WTC11 (cell line): ENCODE measurements at regions of chr19 and their contacts with region 1.

Region 1: DNA sequence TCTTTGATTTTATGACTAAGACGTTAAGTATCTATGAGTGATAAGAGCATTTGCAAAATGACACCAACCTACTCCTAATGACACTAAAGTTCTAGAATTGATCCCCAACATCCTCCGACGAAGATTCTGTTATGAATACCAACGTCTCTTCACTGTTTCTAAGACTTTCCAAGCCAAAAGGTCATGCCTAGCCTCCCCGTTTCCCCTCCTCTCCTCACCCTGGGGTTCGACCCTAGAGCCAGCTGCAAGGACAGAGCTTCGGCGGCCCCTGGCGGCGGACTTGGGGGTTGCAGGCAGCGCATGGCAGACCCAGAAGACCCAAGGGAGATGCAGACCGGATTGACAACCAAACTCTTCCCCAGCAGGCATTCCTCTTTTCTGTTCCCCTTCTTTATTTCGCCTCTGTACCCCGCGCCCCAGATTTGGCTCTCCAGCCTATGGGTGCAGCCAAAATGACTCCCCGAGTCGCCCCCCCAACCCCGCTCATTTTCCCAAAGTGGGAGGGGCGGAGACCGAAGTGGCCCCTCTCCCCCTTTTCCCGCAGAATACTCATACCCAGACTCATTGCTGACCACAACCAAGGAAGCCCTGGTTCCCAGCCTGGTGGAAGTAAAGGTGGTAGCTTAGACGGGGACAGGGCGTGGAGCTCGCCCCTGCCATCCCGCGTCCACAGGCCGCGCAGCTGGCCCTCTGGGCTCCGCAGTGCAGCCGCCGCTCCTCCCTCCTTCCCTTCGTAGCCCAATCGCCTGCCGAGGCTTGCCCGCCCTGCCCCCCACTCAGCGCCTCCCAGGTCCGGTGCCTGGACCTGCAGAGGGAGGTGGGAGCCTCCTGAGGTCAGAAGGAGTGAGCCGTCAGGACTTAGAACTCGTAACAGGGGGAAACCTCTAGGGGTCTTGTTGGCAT is 4.1 kb upstream of the EML2 start:
- DNase-seq: peak; percentile 96
- ATAC-seq: peak; percentile 40
- H3K4me3 Mint-ChIP-seq: peak overlapping the region; percentile 86
- H3K27ac Mint-ChIP-seq: peak overlapping the region; percentile 93
- H3K4me1 Mint-ChIP-seq: peaks cover 40% of the 10 kb centered on the region
- H3K27me3 Mint-ChIP-seq: peaks cover 24% of the 10 kb centered on the region
- CTCF ChIP-seq: peak; percentile 99

Region 2: DNA sequence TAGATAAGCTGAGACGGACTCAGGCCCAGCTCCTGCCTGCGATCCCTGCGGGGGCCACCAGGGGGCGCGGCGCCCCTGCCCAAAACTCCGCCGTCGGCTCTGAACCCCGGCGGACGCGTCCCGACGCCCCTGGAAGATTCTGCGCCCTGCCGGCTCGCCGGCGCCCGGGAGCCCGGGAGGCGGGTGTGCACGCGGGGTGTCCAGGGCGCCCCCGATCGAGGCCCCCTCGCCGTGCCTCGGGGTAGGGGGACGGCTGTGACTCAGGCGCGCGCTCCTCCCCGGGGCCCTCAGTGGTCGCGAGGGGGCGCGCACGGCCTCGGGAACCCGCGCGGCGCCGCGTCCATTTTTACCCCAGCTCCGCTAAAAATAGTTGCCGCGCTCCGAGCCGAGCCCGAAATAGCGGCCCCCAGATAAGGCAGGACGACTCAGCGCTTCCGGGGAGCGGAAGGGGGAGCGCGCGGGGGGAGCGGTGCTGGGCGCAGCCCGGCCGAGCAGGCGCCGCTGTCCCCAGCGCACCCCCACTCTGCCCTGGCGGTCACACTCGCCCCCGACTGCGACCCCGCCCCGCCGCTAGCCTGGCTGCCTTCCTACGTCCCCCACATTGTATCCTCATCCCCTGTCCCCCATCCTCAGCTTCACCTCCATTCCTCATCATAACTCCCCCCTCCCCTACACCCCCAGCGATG is 203.6 kb before region 1 on chr19:
- CTCF ChIA-PET with region 1: interaction called, 22 read pairs
- POLR2A ChIA-PET with region 1: no interaction called
- DNase-seq: peak; percentile 79
- ATAC-seq: peak; percentile 7
- H3K4me3 Mint-ChIP-seq: peak overlapping the region; percentile 69
- H3K27ac Mint-ChIP-seq: no peak overlapping the region
- H3K4me1 Mint-ChIP-seq: peaks cover 26% of the 10 kb centered on the region
- H3K27me3 Mint-ChIP-seq: peaks cover 27% of the 10 kb centered on the region
- CTCF ChIP-seq: peak; percentile 100

Region 3: GRCh38 chr19:45526143-45526542 is 117.1 kb before region 1 on chr19:
- CTCF ChIA-PET with region 1: interaction called, 26 read pairs
- POLR2A ChIA-PET with region 1: no interaction called
- DNase-seq: peak; percentile 93
- ATAC-seq: peak; percentile 46
- H3K4me3 Mint-ChIP-seq: no peak overlapping the region
- H3K27ac Mint-ChIP-seq: peak overlapping the region; percentile 96
- H3K4me1 Mint-ChIP-seq: peaks cover 19% of the 10 kb centered on the region
- H3K27me3 Mint-ChIP-seq: peaks cover 21% of the 10 kb centered on the region
- CTCF ChIP-seq: no peak

Region 4: DNA sequence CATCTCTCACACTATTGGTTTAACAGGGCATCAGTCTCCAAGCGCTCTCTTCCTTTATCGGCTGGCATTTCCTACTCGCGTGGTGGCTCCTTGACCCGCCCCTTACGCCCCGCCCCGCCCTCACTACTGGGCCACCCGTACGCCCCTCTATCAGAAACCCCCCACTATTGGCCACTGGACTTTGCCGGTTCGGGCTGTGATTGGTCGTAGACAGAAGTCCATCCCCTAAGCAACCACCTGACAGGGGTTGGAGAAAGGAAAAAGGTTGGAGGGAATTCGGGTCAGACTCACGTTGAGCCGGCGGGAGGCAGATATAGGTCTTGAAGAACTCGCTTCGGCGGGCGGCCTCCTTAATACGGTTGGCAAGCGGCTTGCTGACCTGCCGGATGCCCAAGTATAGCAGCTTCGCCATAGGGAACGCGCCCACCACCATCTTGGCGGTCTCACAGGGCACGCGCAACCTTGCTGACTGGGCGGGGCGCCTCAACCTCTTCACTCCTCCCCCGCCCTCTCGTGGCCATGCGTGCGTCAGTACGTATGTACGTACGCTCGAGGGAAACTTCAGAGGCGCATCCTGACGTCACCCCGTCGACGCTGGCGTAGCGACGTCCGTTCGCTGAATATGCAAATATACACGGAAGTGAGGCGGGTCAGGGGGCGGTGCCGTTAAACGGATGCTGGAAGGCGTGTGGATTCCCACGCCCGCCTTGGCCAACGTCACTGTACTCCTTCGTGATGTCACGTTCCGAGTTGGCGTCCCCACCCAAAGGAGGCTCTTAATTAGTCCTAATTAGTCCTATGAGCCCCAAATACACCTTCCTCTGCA is 58.7 kb before region 1 on chr19 and contains the start of gene OPA3:
- CTCF ChIA-PET with region 1: interaction called, 35 read pairs
- POLR2A ChIA-PET with region 1: no interaction called
- DNase-seq: peak; percentile 98
- ATAC-seq: peak; percentile 96
- H3K4me3 Mint-ChIP-seq: peak within 1 kb of the TSS; percentile 91
- H3K27ac Mint-ChIP-seq: peak within 1 kb of the TSS; percentile 97
- H3K4me1 Mint-ChIP-seq: peaks cover 17% of the 10 kb centered on the region
- H3K27me3 Mint-ChIP-seq: peaks cover 11% of the 10 kb centered on the region
- CTCF ChIP-seq: no peak
- total RNA-seq, gene OPA3: 10.1 to 16.1 TPM (median 14.9 TPM) in 3 replicates

Region 5: DNA sequence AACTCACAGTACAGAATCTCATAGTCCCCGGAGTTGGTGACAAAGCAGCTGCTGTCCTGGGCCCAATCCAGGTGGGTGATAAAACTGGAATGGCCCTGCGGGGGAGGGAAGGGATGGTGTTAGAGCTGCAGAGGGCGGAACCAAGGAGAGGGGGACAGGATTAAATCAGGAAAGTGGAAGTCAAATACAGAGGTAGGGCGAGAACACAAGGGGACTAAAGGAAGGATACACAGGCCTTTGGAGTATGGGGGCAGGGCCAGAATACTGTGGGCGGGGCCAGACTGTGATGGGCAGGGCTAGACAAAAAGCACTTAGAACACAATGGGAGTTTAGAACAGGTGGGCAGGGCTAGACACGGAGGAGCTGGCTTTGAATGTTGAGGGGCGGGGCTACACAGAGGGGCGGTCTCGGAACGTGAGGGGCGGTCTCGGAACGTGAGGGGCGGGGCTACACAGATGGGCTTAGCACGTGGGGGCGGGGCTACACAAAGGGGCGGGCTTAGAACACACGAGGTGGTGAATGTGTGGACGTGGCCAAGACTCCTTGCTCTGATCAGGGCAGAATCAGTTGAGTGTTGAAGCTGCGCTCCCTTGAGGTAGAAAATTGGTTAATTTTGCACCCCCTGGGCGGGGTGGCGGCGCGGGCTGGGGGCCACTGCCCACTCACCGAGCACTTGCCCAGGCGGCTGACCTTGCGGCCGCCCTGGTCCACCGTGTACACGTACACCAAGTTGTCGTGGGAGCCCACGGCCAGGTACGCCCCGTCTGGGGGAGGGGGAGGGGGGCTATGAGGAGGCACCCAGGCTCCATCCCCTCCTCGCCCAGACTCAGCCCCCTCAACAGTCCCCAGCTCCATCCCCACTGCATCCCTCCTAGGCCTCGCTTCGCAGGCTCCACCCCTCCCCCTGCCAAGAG is 27.2 kb before region 1 on chr19:
- CTCF ChIA-PET with region 1: interaction called, 86 read pairs
- POLR2A ChIA-PET with region 1: interaction called, 13 read pairs
- DNase-seq: peak; percentile 99
- ATAC-seq: peak; percentile 96
- H3K4me3 Mint-ChIP-seq: peak overlapping the region; percentile 86
- H3K27ac Mint-ChIP-seq: peak overlapping the region; percentile 99
- H3K4me1 Mint-ChIP-seq: 0 out of 2 replicates have a peak, but pooled peaks cover 7% of the 10 kb centered on the region
- H3K27me3 Mint-ChIP-seq: no peaks in the 10 kb centered on the region
- CTCF ChIP-seq: no peak

Region 6: DNA sequence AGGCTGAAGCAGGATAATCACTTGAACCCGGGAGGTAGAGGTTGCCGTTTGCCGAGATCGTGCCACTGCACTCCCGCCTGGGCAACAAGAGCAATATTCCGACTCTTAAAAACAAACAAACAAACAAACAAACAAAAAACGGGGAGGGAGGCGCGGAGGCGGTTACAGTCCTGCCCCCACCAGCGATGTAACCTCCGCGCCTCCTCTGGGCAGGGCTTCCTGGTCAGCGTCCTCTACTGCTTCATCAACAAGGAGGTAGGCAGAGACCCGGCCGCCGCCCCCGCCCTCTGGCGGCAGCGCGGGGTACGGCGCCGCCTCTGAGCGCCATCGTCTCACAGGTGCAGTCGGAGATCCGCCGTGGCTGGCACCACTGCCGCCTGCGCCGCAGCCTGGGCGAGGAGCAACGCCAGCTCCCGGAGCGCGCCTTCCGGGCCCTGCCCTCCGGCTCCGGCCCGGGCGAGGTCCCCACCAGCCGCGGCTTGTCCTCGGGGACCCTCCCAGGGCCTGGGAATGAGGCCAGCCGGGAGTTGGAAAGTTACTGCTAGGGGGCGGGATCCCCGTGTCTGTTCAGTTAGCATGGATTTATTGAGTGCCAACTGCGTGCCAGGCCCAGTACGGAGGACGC is 38.2 kb after region 1 on chr19:
- CTCF ChIA-PET with region 1: interaction called, 73 read pairs
- POLR2A ChIA-PET with region 1: interaction called, 4 read pairs
- DNase-seq: peak; percentile 93
- ATAC-seq: peak; percentile 53
- H3K4me3 Mint-ChIP-seq: peak overlapping the region; percentile 65
- H3K27ac Mint-ChIP-seq: no peak overlapping the region
- H3K4me1 Mint-ChIP-seq: peaks cover 14% of the 10 kb centered on the region
- H3K27me3 Mint-ChIP-seq: peaks cover 38% of the 10 kb centered on the region
- CTCF ChIP-seq: peak; percentile 96

Region 7: DNA sequence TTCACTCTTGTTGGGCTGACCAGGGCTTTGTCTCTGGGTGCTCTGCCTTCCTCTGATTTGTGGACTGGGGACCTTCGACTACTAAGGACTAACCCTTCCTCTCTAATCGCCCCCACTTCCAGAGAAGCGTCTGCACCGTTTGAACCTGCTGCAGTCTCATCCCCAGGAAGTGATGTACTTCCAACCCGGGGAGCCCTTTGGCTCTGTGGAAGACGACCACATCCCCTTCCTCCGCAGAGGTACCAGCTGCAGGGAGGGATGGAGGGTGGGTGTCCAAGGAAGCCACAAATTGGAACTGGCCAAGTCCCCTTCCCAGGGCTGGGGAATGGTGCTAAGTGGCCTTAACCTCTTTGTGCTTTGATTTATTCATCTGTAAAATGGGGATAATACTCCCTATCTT is 58.4 kb after region 1 on chr19:
- CTCF ChIA-PET with region 1: no interaction called
- POLR2A ChIA-PET with region 1: no interaction called
- DNase-seq: no peak
- ATAC-seq: no peak
- H3K4me3 Mint-ChIP-seq: no peak overlapping the region
- H3K27ac Mint-ChIP-seq: no peak overlapping the region
- H3K4me1 Mint-ChIP-seq: no peaks in the 10 kb centered on the region
- H3K27me3 Mint-ChIP-seq: no peaks in the 10 kb centered on the region
- CTCF ChIP-seq: no peak